ENCODE measurements at regions of chr3 and their contacts with region 1.

Region 1: DNA sequence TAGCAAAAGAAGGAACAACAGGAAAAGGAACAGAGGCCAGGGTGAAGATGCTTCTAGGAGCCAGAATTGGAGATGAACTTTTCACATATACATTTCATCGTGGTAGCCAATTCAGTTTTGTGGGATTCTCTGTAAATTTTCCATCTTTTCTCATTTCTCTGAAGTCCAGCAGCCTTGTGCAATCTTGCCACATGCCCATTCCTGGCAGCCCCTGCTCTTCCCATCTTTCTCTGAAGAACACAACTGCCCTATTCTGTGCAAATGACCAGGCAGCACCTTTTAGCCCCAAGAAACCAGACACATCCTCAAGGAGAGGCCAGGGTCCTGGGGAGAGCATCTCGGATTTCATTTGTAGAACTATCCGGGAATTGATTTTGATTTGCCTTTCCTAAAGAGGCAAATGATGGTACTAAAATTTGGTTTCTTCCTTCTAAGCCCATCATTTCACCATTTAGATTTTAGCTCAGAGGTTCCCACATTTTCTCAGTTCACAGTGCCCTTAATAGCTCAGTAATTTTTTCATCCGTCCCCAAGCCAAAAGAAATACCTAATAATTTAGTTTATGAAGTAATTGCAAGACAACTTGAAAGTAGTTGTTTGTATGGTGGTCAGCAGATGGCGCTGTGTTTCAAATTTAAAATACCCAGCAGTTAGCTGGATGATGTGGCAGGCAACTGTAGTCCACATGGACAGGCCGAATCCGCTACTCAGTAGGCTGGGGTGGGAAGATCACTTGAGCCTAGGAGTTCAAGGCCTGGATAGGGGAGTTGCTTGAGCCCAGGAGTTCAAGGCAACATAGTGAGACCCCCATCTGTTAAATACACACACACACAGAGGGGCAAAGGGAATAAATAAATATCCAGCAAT is 61.3 kb upstream of the ACKR4 start:
- DNase-seq: peak; percentile 72
- ATAC-seq: peak; percentile 90 to 95

Region 2: DNA sequence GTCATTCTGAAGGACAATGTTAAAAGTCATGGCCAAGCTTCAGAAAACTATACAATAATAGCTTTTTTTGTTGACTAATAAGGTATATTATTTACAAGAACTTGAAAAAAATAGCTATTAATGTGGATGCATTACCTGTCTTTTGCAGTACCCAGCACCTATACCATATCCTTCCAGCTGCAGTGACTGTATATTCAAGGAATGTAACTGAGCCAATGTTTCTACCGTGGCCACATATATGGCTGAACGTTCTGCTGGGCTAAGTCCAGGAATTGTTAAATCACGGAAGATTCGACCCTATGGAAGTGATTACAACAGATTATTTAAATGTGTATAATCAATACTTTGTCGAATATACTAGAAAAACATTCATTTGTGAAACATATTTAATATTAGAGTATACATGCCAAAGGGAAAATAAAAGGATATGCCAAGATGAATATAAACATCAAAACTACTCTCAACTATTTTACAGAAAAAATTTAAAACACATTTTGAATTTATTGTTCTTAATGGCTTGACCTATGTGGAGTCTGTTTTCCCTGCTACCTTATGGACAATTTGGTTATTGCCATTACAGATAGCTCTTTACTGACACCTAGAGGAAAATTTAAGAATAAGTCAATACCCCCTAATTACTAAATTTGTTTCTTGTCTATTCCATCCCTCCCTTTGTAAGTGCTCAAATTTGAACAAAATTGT is 106.2 kb after region 1 on chr3:
- intact Hi-C with region 1: loop called (anchors 2 to 5 kb)
- DNase-seq: no peak
- ATAC-seq: peak; percentile 38 to 67